CD8-positive, alpha-beta T cell (primary cell): ENCODE measurements at regions of chr10 and their contacts with region 1.

Region 1: DNA sequence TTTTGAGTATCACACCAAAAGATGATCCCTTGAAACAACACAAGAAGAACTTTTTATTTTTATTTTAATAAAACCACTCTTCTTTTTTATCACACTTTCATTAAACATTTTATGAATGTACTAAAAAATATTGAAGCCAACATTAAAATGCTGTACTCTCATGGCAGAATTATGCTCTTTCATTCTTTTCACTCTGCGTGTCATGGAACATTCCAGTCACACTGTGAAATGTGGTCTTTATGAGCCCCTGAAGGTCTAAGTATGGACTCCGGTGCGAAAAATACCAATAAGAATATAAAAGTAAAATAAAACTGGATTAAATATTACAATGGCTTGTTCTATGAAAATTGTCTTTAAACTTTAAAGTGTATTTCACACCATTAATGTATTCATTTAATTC is 148.4 kb downstream of the TMEM26 start:
- DNase-seq: no peak
- ATAC-seq: no peak
- H3K4me3 ChIP-seq: no peak overlapping the region
- H3K4me3 Mint-ChIP-seq: no peak overlapping the region
- H3K27ac ChIP-seq: no peak overlapping the region
- H3K27ac Mint-ChIP-seq: no peak overlapping the region
- H3K4me1 ChIP-seq: no peaks in the 10 kb centered on the region
- H3K4me1 Mint-ChIP-seq: no peaks in the 10 kb centered on the region
- H3K27me3 ChIP-seq: no peaks in the 10 kb centered on the region
- H3K27me3 Mint-ChIP-seq: no peaks in the 10 kb centered on the region
- CTCF ChIP-seq: no peak

Region 2: GRCh38 chr10:61063034-61063433 is 241.7 kb before region 1 on chr10:
- CTCF ChIA-PET with region 1: no interaction called
- POLR2A ChIA-PET with region 1: no interaction called
- intact Hi-C with region 1: loop called in 1 of 2 experiments (anchors 5 kb)
- DNase-seq: no peak
- ATAC-seq: no peak
- H3K4me3 ChIP-seq: no peak overlapping the region
- H3K4me3 Mint-ChIP-seq: no peak overlapping the region
- H3K27ac ChIP-seq: no peak overlapping the region
- H3K27ac Mint-ChIP-seq: no peak overlapping the region
- H3K4me1 ChIP-seq: no peaks in the 10 kb centered on the region
- H3K4me1 Mint-ChIP-seq: no peaks in the 10 kb centered on the region
- H3K27me3 ChIP-seq: no peaks in the 10 kb centered on the region
- H3K27me3 Mint-ChIP-seq: no peaks in the 10 kb centered on the region
- CTCF ChIP-seq: no peak